ENCODE measurements at regions of chr11 and their contacts with region 1.

Region 1: GRCh38 chr11:43419460-43419859 is 60.7 kb downstream of the TTC17 start:
- DNase-seq: peak; percentile 63
- ATAC-seq: peak; percentile 72
- H3K4me3 ChIP-seq: no peak overlapping the region
- H3K27ac ChIP-seq: no peak overlapping the region
- H3K4me1 ChIP-seq: no peaks in the 10 kb centered on the region
- H3K27me3 ChIP-seq: no peaks in the 10 kb centered on the region
- CTCF ChIP-seq: peak; percentile 73

Region 2: DNA sequence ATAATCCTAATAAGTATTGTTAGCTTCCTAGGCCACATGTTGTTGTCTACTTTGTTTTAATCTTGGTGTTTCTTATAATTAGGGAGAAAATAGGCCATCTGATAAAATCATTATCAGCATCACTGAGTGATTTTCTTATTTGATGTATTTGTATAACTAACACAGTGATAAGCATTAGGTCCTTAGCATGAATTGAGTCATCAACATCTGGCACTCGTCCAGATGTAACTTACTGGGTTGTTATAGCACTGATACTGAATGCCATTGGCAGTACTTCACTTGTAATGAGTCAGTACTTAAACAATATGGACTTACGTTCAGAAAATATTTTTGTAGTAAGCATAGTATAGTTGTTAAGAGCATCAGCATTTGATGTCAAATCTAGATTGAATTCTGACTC is 91.5 kb before region 1 on chr11:
- CTCF ChIA-PET with region 1: no interaction called
- POLR2A ChIA-PET with region 1: no interaction called
- intact Hi-C with region 1: loop called (anchors 5 kb)
- DNase-seq: peak; percentile 94
- ATAC-seq: peak; percentile 96
- H3K4me3 ChIP-seq: no peak overlapping the region
- H3K27ac ChIP-seq: no peak overlapping the region
- H3K4me1 ChIP-seq: peaks cover 4% of the 10 kb centered on the region; the same call in 1 of the 2 replicates
- H3K27me3 ChIP-seq: no peaks in the 10 kb centered on the region
- CTCF ChIP-seq: no peak

Region 3: GRCh38 chr11:43393765-43394355 is 25.6 kb before region 1 on chr11:
- CTCF ChIA-PET with region 1: no interaction called
- POLR2A ChIA-PET with region 1: no interaction called
- intact Hi-C with region 1: no loop called
- DNase-seq: no peak
- ATAC-seq: no peak
- H3K4me3 ChIP-seq: no peak overlapping the region
- H3K27ac ChIP-seq: no peak overlapping the region
- H3K4me1 ChIP-seq: no peaks in the 10 kb centered on the region
- H3K27me3 ChIP-seq: no peaks in the 10 kb centered on the region
- CTCF ChIP-seq: no peak

Measured in PC-3 (cell line).